ENCODE measurements at regions of chr16 and their contacts with region 1.

Region 1: GRCh38 chr16:15777533-15778203 is 79.2 kb downstream of the MYH11 start:
- DNase-seq: peak; percentile 65
- H3K4me3 Mint-ChIP-seq: no peak overlapping the region
- H3K27ac Mint-ChIP-seq: no peak overlapping the region
- H3K4me1 Mint-ChIP-seq: no peaks in the 10 kb centered on the region
- H3K27me3 Mint-ChIP-seq: peaks cover 76% of the 10 kb centered on the region
- CTCF ChIP-seq: peak; percentile 22

Region 2: DNA sequence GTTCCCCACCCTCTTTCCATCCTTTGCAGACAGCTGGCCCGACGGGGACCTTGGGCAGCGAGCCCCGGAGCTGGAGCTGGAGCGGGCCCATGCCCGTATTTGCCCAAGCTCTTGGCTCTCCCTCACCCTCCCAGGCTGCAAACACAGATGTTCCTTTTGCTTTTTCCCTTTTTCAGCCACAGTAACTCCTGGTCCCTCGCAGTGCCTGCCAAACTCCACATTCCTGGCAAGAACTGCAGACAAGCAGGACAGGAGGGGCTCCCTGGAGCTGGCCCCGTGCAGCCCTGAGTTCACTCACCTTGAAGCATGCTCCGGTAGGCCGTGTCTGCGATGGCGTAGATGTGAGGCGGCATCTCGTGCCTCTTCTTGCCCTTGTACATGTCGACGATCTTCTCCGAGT is 45.3 kb after region 1 on chr16:
- CTCF ChIA-PET with region 1: interaction called, 35 read pairs
- intact Hi-C with region 1: no loop called
- DNase-seq: no peak
- H3K4me3 Mint-ChIP-seq: no peak overlapping the region
- H3K27ac Mint-ChIP-seq: no peak overlapping the region
- H3K4me1 Mint-ChIP-seq: no peaks in the 10 kb centered on the region
- H3K27me3 Mint-ChIP-seq: peaks cover 39% of the 10 kb centered on the region
- CTCF ChIP-seq: no peak

Region 3: GRCh38 chr16:15888072-15888976 is 110.7 kb after region 1 on chr16 and contains the start of gene CEP20:
- CTCF ChIA-PET with region 1: no interaction called
- intact Hi-C with region 1: no loop called
- DNase-seq: peak; percentile 100
- H3K4me3 Mint-ChIP-seq: peak within 1 kb of the TSS; percentile 82
- H3K27ac Mint-ChIP-seq: peak within 1 kb of the TSS; percentile 65
- H3K4me1 Mint-ChIP-seq: peaks cover 21% of the 10 kb centered on the region
- H3K27me3 Mint-ChIP-seq: no peaks in the 10 kb centered on the region
- CTCF ChIP-seq: no peak
- total RNA-seq, gene CEP20: 44.0 and 52.4 TPM in 2 replicates

Measured in Calu3 (cell line).